Motor neuron (in vitro differentiated cells): ENCODE measurements at regions of chr1 and their contacts with region 1.

Region 1: DNA sequence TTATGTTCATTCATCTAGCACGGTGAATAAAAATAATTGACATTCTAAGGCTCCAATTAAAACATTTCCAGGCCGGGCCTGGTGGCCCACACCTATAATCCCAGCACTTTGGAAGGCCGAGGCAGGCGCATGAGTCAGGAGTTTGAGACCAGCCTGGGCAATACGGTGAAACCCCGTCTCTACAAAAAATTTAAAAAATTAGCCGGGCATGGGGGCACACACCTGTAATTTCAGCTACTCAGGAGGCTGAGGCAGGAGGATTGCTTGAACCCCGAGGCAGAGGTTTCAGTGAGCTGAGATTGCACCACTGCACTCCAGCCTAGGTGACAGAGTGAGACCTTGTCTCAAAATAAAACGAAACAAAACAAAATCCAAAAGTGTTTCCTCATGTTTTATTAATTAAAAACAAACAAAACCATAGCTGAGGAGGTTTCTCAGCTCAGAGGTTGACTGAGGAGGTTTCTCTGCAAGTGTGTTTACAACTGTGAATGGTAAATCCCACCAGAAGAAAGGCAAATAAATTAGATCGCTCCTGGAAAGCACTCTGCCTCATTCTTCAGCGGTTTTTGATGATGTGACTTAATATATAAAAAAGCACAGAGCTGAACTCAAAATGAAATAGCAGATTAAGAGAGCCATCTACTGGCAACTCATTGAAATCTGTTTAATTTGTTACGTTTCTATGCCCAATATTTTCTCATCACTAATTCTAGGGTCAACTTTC is 37.7 kb upstream of the ATG4C start:
- ATAC-seq: peak in 4 of 8 experiments; percentile 22 to 71 (median 50)
- H3K4me3 ChIP-seq: no peak overlapping the region
- H3K27ac ChIP-seq: no peak overlapping the region
- H3K4me1 ChIP-seq: no peaks in the 10 kb centered on the region

Region 2: GRCh38 chr1:62159940-62160348 is 586.3 kb before region 1 on chr1:
- in situ Hi-C with region 1: loop called in 2 of 9 experiments (anchors 25 kb)
- ATAC-seq: no peak
- H3K4me3 ChIP-seq: no peak overlapping the region
- H3K27ac ChIP-seq: no peak overlapping the region
- H3K4me1 ChIP-seq: no peaks in the 10 kb centered on the region

Region 3: DNA sequence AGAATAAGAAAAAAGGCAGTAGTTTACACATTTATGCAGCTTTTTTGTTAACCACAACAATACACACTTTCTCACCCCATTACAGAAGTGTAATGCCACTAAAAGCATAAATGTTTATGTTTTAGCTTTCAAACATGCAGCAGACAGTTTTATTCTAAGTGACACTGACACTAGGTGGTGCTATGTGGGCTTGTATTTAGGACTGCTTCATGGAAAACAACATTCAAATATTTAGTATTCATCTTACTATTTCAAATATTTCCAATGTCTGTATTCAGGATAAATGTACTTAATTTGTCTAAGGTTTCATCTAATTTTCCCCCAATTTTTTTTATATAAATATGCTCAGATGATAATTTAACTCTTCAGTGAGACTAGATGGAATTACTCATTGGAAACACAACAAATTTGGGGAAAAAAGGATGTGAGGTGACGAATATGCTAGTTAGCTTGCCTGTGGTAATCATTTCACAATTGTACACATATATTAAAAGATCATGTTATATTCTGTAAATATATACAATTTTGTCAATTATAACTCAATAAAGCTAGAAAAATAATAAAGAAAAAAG is 238.0 kb before region 1 on chr1:
- in situ Hi-C with region 1: loop called in 3 of 9 experiments (anchors 10 to 25 kb)
- ATAC-seq: peak in 2 of 8 experiments; percentile 32 to 45
- H3K4me3 ChIP-seq: no peak overlapping the region
- H3K27ac ChIP-seq: no peak overlapping the region
- H3K4me1 ChIP-seq: no peaks in the 10 kb centered on the region

Region 4: DNA sequence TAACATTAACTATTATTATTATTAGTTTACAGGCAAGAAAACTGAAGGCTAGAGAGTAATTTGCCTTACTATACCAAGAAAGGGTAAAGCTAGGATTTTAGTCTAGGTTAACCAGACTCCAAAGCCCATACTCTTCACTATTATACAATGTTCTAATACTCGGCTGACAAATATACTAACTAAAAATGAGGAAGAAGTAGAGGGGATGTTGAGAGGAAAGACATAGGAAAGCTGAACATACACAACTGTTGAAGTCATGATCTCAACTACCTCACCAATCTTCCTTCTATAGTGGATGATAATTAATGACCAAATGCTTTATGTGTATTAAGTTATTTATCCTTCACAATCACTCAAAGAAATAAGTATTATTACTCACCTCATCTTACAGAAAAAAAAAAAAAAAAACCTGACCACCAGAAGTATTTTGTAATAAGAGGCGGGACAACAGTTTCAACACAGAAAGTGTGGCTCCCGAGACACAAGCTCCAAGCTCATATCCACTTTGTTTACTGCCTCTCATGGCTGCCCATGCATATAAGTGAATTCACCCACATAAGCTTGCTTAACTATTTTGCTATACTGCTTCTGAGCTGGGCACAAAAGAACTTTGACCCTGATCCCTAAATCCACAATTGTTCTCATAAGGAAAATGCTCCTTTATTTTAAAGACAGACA is 231.4 kb before region 1 on chr1:
- in situ Hi-C with region 1: loop called in 3 of 9 experiments (anchors 10 to 25 kb)
- ATAC-seq: no peak
- H3K4me3 ChIP-seq: no peak overlapping the region
- H3K27ac ChIP-seq: no peak overlapping the region
- H3K4me1 ChIP-seq: no peaks in the 10 kb centered on the region

Region 5: GRCh38 chr1:62530516-62531154 is 215.6 kb before region 1 on chr1:
- in situ Hi-C with region 1: loop called in 1 of 9 experiments (anchors 25 kb)
- ATAC-seq: peak in 5 of 8 experiments; percentile 48 to 88 (median 62)
- H3K4me3 ChIP-seq: no peak overlapping the region
- H3K27ac ChIP-seq: no peak overlapping the region
- H3K4me1 ChIP-seq: no peaks in the 10 kb centered on the region